Activated CD8-positive, alpha-beta T cell treated with anti-CD3 and anti-CD28 coated beads for 36 hours (primary cell): ENCODE measurements at regions of chr5 and their contacts with region 1.

Region 1: GRCh38 chr5:142655339-142656267 is 30.3 kb downstream of the FGF1 start:
- DNase-seq: peak; percentile 81
- ATAC-seq: peak; percentile 93
- H3K4me3 Mint-ChIP-seq: no peak overlapping the region
- H3K27ac Mint-ChIP-seq: no peak overlapping the region
- H3K4me1 Mint-ChIP-seq: no peaks in the 10 kb centered on the region
- H3K27me3 Mint-ChIP-seq: peaks cover 12% of the 10 kb centered on the region
- CTCF ChIP-seq: peak; percentile 97

Region 2: GRCh38 chr5:142353071-142353472 is 302.5 kb before region 1 on chr5:
- CTCF ChIA-PET with region 1: no interaction called
- POLR2A ChIA-PET with region 1: no interaction called
- intact Hi-C with region 1: no loop called
- DNase-seq: no peak
- ATAC-seq: no peak
- H3K4me3 Mint-ChIP-seq: no peak overlapping the region
- H3K27ac Mint-ChIP-seq: no peak overlapping the region
- H3K4me1 Mint-ChIP-seq: peaks cover 18% of the 10 kb centered on the region
- H3K27me3 Mint-ChIP-seq: no peaks in the 10 kb centered on the region
- CTCF ChIP-seq: no peak

Region 3: GRCh38 chr5:142637871-142638270 is 17.7 kb before region 1 on chr5:
- CTCF ChIA-PET with region 1: interaction called, 72 read pairs
- POLR2A ChIA-PET with region 1: no interaction called
- intact Hi-C with region 1: no loop called
- DNase-seq: no peak
- ATAC-seq: no peak
- H3K4me3 Mint-ChIP-seq: no peak overlapping the region
- H3K27ac Mint-ChIP-seq: no peak overlapping the region
- H3K4me1 Mint-ChIP-seq: no peaks in the 10 kb centered on the region
- H3K27me3 Mint-ChIP-seq: peaks cover 14% of the 10 kb centered on the region
- CTCF ChIP-seq: no peak

Region 4: GRCh38 chr5:142677198-142677597 is 21.6 kb after region 1 on chr5:
- CTCF ChIA-PET with region 1: interaction called, 10 read pairs
- POLR2A ChIA-PET with region 1: no interaction called
- intact Hi-C with region 1: no loop called
- DNase-seq: no peak
- ATAC-seq: no peak
- H3K4me3 Mint-ChIP-seq: no peak overlapping the region
- H3K27ac Mint-ChIP-seq: no peak overlapping the region
- H3K4me1 Mint-ChIP-seq: no peaks in the 10 kb centered on the region
- H3K27me3 Mint-ChIP-seq: no peaks in the 10 kb centered on the region
- CTCF ChIP-seq: no peak

Region 5: DNA sequence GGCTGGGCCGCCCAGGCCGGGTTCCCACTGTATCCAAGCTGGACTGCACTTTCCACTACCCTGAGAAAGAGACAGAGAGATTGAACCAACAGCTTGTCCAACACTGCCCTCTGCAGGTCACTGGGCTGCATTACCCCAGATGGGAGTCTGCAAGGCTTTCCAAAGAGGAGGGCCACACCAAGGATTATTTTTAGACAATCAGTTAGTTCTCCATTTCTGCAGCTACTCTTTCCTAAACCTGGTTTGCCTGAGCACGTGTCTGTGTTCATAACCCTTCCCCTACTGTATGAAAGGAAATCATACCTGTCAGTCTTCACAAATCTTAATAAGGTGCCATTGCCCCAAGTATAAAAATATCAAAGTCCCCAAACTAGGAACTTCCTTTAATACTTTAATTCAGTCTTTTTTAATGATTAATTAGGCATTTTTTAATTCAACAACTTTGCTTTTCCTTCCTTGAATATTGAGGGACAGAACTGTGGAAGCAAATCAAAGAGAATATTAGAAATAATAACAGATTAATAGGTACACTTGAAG is 43.6 kb after region 1 on chr5:
- CTCF ChIA-PET with region 1: interaction called, 124 read pairs
- POLR2A ChIA-PET with region 1: interaction called, 3 read pairs
- intact Hi-C with region 1: loop called (anchors 1 kb)
- DNase-seq: peak; percentile 86
- ATAC-seq: peak; percentile 98
- H3K4me3 Mint-ChIP-seq: no peak overlapping the region
- H3K27ac Mint-ChIP-seq: no peak overlapping the region
- H3K4me1 Mint-ChIP-seq: peaks cover 2% of the 10 kb centered on the region
- H3K27me3 Mint-ChIP-seq: peaks cover under 1% of the 10 kb centered on the region
- CTCF ChIP-seq: peak; percentile 97

Region 6: DNA sequence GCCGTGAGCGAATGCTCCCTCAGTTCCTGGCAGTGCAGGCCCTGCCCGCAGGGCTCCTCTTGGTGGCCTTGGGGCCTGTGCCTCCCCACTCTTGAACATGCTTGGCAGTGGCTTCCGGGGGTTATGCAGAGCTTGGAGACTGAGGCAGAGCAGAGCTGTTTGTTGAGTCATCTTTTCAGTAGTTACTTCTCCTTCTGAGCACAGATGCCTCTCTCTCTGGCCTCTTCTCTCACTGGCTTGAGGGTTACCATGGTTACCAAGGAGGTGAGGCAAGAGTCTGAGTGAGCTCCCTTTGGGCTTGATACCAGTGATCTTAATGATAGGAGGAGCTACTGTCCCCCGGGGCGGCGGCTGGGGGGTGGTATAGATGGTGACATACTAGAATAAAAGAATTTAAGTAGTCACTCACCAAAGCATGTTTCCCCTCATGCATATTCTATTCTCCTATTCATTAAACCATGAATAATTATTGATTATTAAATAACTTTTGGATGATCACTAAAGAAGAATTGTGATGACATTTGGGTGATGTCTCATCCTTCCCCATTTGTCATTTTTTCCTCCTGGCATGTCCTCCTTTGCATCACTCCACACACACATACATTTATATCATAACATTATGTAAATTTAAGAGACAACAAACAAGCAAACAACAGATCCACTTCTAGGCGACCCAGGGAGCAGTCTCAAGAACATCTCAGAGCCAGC is 225.6 kb after region 1 on chr5:
- CTCF ChIA-PET with region 1: interaction called, 28 read pairs
- POLR2A ChIA-PET with region 1: no interaction called
- intact Hi-C with region 1: loop called (anchors 5 kb)
- DNase-seq: no peak
- ATAC-seq: peak; percentile 37
- H3K4me3 Mint-ChIP-seq: no peak overlapping the region
- H3K27ac Mint-ChIP-seq: no peak overlapping the region
- H3K4me1 Mint-ChIP-seq: peaks cover 8% of the 10 kb centered on the region
- H3K27me3 Mint-ChIP-seq: no peaks in the 10 kb centered on the region
- CTCF ChIP-seq: no peak

Region 7: GRCh38 chr5:142998316-142999020 is 342.9 kb after region 1 on chr5:
- CTCF ChIA-PET with region 1: no interaction called
- POLR2A ChIA-PET with region 1: no interaction called
- intact Hi-C with region 1: no loop called
- DNase-seq: no peak
- ATAC-seq: no peak
- H3K4me3 Mint-ChIP-seq: no peak overlapping the region
- H3K27ac Mint-ChIP-seq: peak overlapping the region; percentile 76
- H3K4me1 Mint-ChIP-seq: peaks cover 74% of the 10 kb centered on the region
- H3K27me3 Mint-ChIP-seq: no peaks in the 10 kb centered on the region
- CTCF ChIP-seq: no peak